Left cardiac atrium (tissue), 4 donors: ENCODE measurements at regions of chr21 and their contacts with region 1.

Region 1: GRCh38 chr21:45820171-45821091 is 161.1 kb upstream of the COL6A1 start:
- DNase-seq: peak; percentile 80
- ATAC-seq: peak; percentile 87 to 93

Region 2: DNA sequence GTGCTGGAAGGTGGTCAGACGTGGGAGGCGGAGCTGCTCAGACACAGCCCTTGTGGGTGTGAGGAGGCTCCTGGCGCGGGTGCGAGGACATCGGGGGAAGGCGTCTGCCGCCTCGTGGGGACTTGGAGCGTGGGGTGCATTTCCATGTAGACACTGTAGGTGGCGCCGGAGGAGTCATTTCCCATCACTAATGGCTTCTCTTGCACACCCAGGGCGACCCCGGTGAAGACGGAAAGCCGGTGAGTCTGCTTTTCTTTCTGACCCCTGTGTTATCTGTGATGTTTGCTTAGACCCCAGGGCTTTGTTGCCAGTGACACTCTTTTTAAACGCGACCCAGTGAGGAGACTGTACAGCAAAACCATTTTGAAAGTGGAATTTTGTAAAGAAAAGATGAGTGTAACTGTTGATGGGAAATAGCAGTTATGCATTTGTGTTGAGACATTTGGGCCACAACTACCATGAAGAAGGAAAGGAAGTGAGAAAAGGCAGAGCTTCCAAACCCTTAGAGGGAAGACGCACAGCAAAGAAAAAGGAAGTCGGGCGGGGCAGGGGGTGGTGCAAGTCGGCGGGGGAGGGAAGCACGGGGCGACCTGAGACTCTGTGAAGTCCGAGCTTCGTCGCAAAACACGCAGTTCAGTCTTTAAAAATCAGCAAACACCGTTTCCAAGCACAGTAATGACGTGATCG is 342.2 kb before region 1 on chr21:
- intact Hi-C with region 1: loop called in 1 of 2 experiments (anchors 5 kb)
- DNase-seq: peak; percentile 74
- ATAC-seq: peak; percentile 37 to 64

Region 3: DNA sequence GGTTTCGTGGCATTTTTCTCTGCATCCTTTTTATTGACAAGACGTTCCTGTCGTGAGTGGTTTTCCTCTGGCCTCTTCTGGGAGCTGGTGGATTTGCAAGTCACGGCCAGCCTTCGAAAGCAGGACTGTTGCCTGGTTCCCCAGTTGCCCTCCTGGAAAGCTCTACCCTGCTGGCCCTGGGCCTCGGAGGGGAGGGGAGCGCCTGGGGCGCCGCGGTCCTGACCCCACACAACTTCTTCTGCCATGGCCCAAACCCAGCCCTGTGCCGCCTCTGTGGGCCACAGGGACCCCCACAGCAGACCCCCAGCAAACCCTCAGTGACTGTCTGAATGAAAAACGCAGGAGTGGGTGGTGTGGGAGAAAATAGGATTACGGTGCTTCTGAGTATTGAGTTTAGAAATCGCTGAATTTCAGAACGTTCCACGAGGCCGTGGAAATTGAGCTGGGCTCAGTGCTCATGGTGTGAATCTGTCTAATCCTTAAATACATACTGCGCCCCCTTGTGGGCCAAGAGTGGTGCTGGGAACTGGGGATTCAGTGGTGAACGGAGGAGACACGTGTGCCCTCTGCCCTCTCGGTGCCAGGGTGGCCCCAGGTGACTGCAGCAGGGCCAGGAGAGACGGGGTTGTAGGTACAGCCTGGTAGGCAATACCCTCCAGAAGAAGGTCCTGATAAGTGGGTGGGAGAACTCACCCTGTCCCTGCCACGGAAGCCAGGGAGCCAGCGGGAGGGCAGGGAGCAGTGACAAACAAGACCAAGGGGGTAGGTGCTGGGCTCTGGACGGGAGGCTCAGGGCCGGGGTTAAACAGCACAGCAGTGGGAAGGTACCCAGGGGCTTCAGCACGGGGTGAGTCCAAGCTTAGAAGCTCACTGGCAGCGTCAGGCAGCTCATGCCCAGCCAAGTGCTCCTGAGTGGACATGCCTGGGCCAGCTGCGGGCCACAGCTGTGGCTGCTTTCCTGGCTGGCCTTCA is 60.0 kb after region 1 on chr21:
- intact Hi-C with region 1: no loop called
- DNase-seq: peak; percentile 81
- ATAC-seq: peak; percentile 69 to 82

Region 4: DNA sequence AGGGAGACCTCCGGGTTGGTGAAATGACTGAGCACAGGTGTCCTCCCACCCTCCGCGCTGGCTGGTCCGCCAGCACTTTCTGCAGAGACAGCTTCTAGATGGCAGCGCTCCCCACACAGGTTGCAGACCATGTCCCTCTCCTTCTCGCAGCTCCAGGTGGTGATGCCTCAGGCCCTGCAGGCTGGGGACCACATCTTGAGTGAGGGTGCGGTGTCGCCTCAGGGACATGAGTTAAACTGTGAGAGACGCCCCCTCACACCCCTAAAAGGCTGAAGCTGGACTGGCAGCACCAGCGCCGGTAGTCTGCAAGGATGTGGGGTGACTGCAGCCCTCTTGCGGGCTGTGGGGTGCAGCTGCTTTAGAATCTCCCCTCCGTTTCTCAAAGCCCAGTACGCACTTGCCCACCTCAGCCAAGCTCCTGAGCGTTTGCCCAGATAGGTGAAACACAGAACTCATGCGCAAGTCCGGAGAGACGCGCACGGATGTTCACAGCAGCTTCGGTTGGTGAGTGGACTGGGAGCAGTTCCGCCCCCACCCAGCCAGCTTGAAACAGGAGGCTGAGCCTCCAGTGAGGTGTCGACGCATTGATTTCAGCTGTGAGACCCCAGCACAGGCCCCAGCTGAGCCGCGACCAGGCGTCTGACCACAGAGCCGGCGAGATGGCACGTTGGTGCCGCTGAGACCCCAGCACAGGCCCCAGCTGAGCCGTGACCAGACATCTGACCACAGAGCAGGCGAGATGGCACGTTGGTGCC is 189.7 kb after region 1 on chr21:
- intact Hi-C with region 1: no loop called
- DNase-seq: no peak
- ATAC-seq: no peak

Region 5: GRCh38 chr21:46022551-46023525 is 202.4 kb after region 1 on chr21:
- intact Hi-C with region 1: no loop called
- DNase-seq: peak; percentile 36
- ATAC-seq: peak; percentile 60 to 81